ENCODE measurements at regions of chr6 and their contacts with region 1.

Region 1: DNA sequence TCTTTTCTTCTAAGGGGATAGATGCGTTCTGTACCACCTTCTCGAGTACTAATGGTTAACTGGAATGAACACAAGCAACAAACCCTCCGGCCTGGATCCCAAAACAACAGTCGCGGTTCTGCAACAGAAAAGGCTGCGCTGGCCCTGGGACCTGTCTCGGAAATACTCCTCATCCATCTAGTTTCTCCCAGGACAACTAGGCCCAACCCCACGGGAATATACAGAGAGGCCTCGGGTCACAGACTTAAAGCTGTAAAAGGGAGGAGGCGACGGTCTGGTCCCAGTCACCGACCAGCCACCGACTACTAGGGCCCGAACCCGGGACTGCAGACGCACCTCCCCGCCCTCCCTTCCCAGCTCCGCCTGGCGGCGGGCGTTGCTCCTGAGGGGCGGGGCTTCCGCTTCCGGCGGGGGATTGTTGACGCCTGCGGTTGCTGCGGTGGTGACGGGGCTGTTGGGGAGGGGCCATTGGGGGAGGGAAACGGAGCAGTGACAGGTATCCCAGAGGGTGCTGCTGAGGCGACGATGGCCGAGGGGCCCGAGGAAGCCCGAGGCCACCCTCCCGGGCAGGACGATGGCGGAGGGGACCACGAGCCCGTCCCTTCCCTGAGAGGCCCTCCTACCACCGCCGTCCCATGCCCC is at the start of gene FAM8A1:
- DNase-seq: peak; percentile 92 to 98 (median 96)
- H3K4me3 ChIP-seq: peak within 1 kb of the TSS; percentile 61 to 100 (median 95)
- H3K27ac ChIP-seq: peak within 1 kb of the TSS; percentile 49 to 98 (median 94)
- H3K27me3 ChIP-seq: no peaks in the 10 kb centered on the region
- CTCF ChIP-seq: peak in 53 of 56 donors; percentile 24 to 79 (median 63)
- total RNA-seq, gene FAM8A1: 25.8 to 45.3 (median 38.1) TPM

Region 2: DNA sequence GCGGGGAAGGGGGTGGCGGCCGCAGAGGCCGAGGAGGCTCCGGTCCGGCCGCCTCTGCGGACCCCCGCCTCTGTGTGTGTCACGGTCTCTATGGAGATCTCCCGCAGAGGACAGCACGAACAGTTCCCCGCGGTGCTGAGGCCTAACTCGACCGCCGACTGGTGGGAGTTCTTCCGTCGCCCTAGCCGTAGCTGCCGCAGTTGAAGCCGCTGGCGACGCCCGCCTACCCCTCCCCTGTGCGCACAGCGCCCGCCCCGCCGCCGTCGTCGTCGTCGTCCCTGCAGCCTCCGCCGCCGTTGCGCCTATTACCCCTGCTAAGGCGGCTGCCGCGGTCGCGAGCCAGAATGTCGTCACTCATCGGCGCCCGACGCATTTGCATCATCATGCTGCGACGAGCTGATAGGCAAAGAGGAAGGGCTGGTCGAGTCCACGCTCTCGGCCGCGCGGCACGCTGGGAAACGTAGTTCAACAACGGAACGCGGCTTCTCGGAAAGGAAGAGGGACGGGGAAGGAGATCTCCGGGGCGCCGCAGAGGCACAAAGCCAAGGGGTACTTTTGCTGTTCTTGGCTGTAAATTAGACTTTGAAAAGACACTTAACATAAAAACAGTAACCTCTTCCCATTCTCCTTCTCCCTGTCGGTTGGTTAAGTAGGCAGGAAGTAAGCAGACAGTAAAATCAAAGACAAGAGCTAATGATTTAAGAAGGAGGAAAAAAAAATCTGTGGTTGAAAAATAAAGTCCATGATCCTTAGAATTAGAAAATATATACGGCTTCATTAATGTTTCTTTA is 106.8 kb after region 1 on chr6 and contains the start of gene NUP153:
- intact Hi-C with region 1: loop called (anchors 2 kb)
- DNase-seq: peak; percentile 96 to 100 (median 99)
- H3K4me3 ChIP-seq: peak within 1 kb of the TSS; percentile 77 to 100 (median 96)
- H3K27ac ChIP-seq: peak within 1 kb of the TSS; percentile 74 to 99 (median 95)
- H3K27me3 ChIP-seq: no peaks in the 10 kb centered on the region
- CTCF ChIP-seq: peak in 31 of 56 donors; percentile 2 to 63 (median 34)
- total RNA-seq, gene NUP153: 26.7 to 40.0 (median 33.5) TPM

Region 3: DNA sequence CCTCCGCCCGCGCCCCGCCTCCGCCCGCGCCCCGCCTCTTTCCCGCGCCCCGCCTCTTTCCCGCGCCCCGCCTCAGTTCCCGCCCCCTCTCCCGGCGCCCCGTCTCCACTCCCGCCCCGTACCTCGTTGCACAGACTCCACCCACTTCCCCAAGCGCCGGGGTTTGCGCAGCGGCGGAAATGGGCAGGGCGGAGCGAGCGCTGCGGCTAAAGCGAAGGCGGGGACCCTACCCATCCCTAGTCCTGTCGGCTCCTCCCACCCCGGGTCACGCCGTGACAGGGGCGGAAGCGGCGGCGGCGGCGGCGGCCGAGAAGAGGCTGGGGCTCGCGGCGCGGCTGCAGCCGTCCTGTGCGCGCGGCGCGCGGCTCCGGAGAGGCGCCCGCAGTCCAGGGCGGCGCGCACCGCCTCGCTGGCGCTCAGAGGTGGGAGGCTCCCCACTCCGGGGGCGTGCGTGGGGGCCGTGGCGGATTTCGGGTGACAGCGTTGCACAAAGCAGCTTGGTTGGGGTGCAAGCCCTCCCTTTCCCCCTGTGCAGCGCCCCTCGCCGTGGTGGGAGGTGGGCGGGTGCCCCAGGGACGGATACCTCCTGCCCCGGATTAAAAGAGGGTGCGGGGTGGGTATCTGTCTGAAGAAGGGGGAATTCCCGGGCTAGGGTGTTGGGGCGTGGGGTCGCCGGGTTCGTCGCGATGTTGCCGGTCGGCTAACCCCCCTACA is 555.3 kb after region 1 on chr6 and contains the start of gene KDM1B:
- intact Hi-C with region 1: loop called in 1 of 2 experiments (anchors 5 kb)
- DNase-seq: peak; percentile 95 to 99 (median 98)
- H3K4me3 ChIP-seq: peak within 1 kb of the TSS; percentile 68 to 99 (median 93)
- H3K27ac ChIP-seq: peak within 1 kb of the TSS in 57 of 59 donors; percentile 52 to 93 (median 87)
- H3K27me3 ChIP-seq: no peaks in the 10 kb centered on the region
- CTCF ChIP-seq: peak in 18 of 56 donors; percentile 1 to 50 (median 20)
- total RNA-seq, gene KDM1B: 13.3 to 38.5 (median 24.4) TPM

Region 4: DNA sequence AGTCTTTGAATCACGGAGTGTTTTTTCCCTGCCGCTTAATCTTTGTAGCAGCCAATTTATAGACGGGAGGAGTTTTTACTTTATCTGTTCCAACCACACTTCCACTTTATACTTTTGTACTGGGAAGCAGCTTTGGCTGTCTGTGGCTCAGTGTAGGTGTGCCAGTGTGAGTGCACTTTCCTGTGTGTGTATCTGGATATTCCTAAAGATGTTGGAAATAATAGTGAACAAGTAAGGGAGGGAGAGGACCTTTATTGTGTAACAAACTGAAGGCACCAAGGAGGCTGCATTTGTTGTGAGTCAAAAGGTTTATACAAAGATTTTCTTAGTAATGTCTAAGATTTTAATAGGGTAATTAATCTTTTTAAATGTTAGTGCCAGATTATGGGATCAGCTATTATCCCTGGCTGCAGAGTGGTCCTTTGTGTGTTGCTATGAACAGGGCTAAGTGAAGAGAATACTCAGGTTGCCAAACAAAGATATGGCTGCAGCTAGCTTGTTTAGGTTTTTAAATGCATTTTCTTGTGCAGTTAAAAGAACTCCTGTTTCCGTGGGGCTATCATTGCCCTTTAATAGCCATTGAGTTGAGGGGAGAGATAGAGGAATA is 1013.4 kb after region 1 on chr6:
- intact Hi-C with region 1: no loop called
- DNase-seq: no peak
- H3K4me3 ChIP-seq: no peak overlapping the region
- H3K27ac ChIP-seq: no peak overlapping the region
- H3K27me3 ChIP-seq: peaks cover 0 to 4% (median 0%) of the 10 kb centered on the region in 45 donors
- CTCF ChIP-seq: no peak